ENCODE measurements at regions of chr1 and their contacts with region 1.

Region 1: GRCh38 chr1:154982897-154983648 is at the start of gene FLAD1:
- DNase-seq: peak; percentile 100
- H3K4me3 Mint-ChIP-seq: no peak within 1 kb of the TSS
- H3K27ac Mint-ChIP-seq: no peak within 1 kb of the TSS
- H3K4me1 Mint-ChIP-seq: peaks cover 6% of the 10 kb centered on the region
- H3K27me3 Mint-ChIP-seq: no peaks in the 10 kb centered on the region
- CTCF ChIP-seq: no peak
- total RNA-seq, gene FLAD1: 65.4 and 91.1 TPM in 2 replicates

Region 2: GRCh38 chr1:154689070-154689469 is 294.0 kb before region 1 on chr1:
- CTCF ChIA-PET with region 1: no interaction called
- POLR2A ChIA-PET with region 1: no interaction called
- intact Hi-C with region 1: no loop called
- DNase-seq: no peak
- H3K4me3 Mint-ChIP-seq: no peak overlapping the region
- H3K27ac Mint-ChIP-seq: no peak overlapping the region
- H3K4me1 Mint-ChIP-seq: no peaks in the 10 kb centered on the region
- H3K27me3 Mint-ChIP-seq: peaks cover 79% of the 10 kb centered on the region
- CTCF ChIP-seq: no peak

Region 3: GRCh38 chr1:154847891-154848290 is 135.2 kb before region 1 on chr1:
- CTCF ChIA-PET with region 1: no interaction called
- POLR2A ChIA-PET with region 1: no interaction called
- intact Hi-C with region 1: no loop called
- DNase-seq: peak; percentile 20
- H3K4me3 Mint-ChIP-seq: no peak overlapping the region
- H3K27ac Mint-ChIP-seq: no peak overlapping the region
- H3K4me1 Mint-ChIP-seq: no peaks in the 10 kb centered on the region
- H3K27me3 Mint-ChIP-seq: peaks cover 42% of the 10 kb centered on the region
- CTCF ChIP-seq: no peak

Region 4: GRCh38 chr1:154936555-154937084 is 46.5 kb before region 1 on chr1 and contains the start of gene PMVK:
- CTCF ChIA-PET with region 1: interaction called, 3 read pairs
- POLR2A ChIA-PET with region 1: interaction called, 11 read pairs
- intact Hi-C with region 1: no loop called
- DNase-seq: peak; percentile 99
- H3K4me3 Mint-ChIP-seq: peak within 1 kb of the TSS; percentile 90
- H3K27ac Mint-ChIP-seq: peak within 1 kb of the TSS; percentile 100
- H3K4me1 Mint-ChIP-seq: peaks cover 49% of the 10 kb centered on the region
- H3K27me3 Mint-ChIP-seq: no peaks in the 10 kb centered on the region
- CTCF ChIP-seq: peak; percentile 26
- total RNA-seq, gene PMVK: 57.7 and 68.9 TPM in 2 replicates

Region 5: DNA sequence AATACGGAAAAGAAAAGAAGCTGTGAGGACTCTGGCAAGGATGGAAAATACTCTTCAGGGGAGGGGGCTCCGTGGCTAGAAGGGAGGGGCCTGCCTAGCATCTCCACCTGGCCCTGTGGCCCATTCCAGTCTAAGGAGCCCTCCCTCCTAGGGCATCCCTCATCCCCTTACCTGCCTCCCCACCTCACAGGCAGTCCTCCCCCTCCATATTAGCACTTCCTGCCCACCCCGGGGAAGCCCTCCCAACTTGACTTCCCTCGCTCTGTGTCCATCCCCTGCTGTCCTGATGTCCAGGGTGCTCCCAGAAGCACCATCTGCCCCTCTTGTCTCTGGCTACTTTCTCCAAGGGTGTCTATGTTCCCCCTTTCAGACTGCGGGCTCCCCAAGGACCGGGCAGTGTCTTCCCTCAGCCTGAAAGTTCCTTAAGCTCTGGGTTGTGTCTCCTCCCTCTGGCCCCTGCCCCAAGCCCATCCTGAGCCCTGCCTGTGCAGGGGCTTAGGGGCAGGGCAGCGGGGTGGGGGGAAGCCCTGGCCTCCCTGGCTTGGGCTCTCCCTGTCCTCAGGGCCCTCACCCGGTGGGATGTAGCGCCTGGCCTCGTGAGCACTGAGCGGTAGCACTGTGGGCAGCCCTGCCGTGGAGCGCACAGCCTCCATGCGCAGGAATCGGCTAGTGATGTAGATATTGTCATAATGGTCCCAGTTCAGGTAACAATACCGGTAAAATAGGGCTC is 46.6 kb after region 1 on chr1:
- CTCF ChIA-PET with region 1: no interaction called
- POLR2A ChIA-PET with region 1: no interaction called
- intact Hi-C with region 1: no loop called
- DNase-seq: no peak
- H3K4me3 Mint-ChIP-seq: no peak overlapping the region
- H3K27ac Mint-ChIP-seq: no peak overlapping the region
- H3K4me1 Mint-ChIP-seq: peaks cover 9% of the 10 kb centered on the region
- H3K27me3 Mint-ChIP-seq: no peaks in the 10 kb centered on the region
- CTCF ChIP-seq: no peak

Region 6: DNA sequence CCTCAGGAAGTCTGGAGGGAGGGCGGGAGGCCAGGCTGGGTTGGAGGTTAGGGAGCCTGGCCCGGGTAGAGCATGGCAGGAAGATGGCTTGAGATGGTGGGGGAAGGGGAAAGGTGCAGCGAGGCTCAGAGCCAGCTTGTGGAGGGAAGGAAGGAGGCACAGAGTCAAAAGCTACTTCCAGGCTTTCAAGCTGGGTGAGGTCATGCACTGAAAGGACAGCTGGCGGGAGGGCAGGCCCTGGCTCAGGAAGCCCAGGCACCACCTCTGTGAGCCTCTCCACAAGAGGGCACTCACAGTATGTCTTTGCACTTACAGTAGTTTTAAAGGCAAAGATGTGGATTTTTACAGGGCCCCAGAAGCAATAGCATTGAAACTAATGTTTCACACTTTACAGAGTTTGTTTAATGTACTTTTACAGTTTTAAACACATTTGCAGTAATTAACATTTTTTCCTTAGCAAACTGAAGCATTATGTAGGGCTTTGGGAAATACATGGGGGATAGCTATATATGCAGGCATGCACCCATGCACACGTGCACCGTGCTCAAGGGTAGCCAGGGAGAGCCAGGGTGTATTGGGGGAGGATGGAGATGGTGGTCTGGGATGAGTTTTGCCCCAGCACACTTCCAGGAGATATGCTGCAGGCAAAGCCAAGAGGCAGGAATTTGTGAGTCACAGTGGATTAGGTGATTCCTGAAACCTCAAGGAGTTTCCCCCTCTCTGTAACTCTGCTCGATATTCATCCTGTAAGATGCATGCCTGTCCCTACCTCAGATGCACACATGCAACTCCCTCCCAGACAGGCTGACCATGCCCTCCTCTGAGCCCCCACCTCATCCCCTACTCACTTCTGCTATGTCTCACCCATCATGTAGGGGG is 62.0 kb after region 1 on chr1:
- CTCF ChIA-PET with region 1: interaction called, 23 read pairs
- POLR2A ChIA-PET with region 1: interaction called, 5 read pairs
- intact Hi-C with region 1: no loop called
- DNase-seq: peak; percentile 90
- H3K4me3 Mint-ChIP-seq: no peak overlapping the region
- H3K27ac Mint-ChIP-seq: no peak overlapping the region
- H3K4me1 Mint-ChIP-seq: peaks cover 37% of the 10 kb centered on the region
- H3K27me3 Mint-ChIP-seq: no peaks in the 10 kb centered on the region
- CTCF ChIP-seq: peak; percentile 83

Region 7: DNA sequence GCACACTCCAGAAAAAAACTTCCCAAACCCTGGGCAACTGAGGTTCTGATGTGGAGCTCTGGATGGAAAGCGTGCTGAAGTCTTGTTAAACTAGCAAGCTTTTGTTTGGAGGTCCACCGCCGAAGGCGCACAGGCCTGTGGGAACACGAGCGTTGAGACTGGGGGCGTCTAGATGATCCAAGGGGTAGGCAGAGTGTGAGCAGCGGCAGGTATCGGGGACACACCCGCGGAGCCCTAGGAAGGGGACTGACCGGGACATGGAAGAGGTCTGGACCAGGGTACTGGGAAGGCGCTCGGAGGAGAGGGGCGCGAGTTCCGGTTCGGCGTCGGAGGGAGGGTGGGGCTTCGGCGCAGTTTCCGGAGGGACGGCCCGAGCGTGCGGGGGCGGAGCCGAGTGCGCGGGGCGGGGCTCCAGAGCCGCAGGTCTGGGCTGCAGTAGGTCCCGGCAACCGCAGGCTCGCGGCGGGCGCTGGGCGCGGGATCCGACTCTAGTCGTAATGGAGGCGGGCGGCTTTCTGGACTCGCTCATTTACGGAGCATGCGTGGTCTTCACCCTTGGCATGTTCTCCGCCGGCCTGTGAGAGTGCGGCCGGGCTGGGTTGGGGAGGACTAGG is 152.4 kb after region 1 on chr1 and contains the start of gene SLC50A1:
- CTCF ChIA-PET with region 1: no interaction called
- POLR2A ChIA-PET with region 1: interaction called, 15 read pairs
- intact Hi-C with region 1: no loop called
- DNase-seq: peak; percentile 94
- H3K4me3 Mint-ChIP-seq: peak within 1 kb of the TSS; percentile 80
- H3K27ac Mint-ChIP-seq: peak within 1 kb of the TSS; percentile 94
- H3K4me1 Mint-ChIP-seq: peaks cover 50% of the 10 kb centered on the region
- H3K27me3 Mint-ChIP-seq: no peaks in the 10 kb centered on the region
- CTCF ChIP-seq: no peak
- total RNA-seq, gene SLC50A1: 91.2 and 97.8 TPM in 2 replicates

Measured in MCF 10A (cell line).